ENCODE measurements at regions of chr3 and their contacts with region 1.

Region 1: DNA sequence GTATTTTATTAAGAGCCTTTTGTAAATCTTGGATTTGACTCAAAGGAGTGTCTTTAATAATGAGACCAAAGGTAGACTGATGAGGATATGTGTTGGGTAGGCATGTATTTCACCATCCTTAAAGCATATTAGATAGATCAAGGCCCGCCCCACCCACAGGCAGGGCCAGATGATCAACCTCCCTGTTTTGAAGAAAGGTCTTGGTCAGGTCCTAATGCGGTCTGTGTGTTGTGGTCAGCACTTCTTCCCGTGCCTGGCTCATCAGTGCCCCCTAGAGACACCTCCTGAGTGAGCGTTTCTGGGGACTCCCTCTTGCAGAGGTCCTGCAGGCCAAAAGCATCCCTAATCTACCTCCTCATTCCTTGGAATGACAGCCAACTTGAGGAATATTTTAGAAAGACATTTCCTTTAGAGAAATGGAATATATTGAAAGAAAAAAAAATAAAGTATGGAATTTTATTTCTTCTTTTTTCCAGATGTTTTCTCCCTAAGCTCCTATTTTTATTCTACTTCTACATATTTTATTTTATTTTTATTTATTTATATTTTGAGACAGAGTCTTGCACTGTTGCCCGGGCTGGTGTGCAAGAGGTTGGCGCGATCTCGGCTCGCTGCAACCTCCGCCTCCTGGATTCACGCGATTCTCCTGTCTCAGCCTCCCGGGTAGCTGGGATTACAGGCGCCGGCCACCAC is 6.0 kb downstream of the TM4SF4 start:
- DNase-seq: peak; percentile 81
- H3K4me3 ChIP-seq: no peak overlapping the region
- H3K27ac ChIP-seq: peak overlapping the region in 2 of 4 donors; percentile 2 to 15
- H3K4me1 ChIP-seq: peaks cover 0 to 9% (median 0%) of the 10 kb centered on the region in 4 donors
- H3K27me3 ChIP-seq: no peaks in the 10 kb centered on the region
- CTCF ChIP-seq: peak; percentile 70 to 77 (median 75)
- EP300 ChIP-seq: no peak
- POLR2A ChIP-seq: no peak

Region 2: GRCh38 chr3:147544290-147544689 is 1936.2 kb before region 1 on chr3:
- in situ Hi-C with region 1: no loop called
- intact Hi-C with region 1: no loop called
- DNase-seq: no peak
- H3K4me3 ChIP-seq: no peak overlapping the region
- H3K27ac ChIP-seq: no peak overlapping the region
- H3K4me1 ChIP-seq: no peaks in the 10 kb centered on the region
- H3K27me3 ChIP-seq: no peaks in the 10 kb centered on the region
- CTCF ChIP-seq: no peak
- EP300 ChIP-seq: no peak
- POLR2A ChIP-seq: no peak

Region 3: DNA sequence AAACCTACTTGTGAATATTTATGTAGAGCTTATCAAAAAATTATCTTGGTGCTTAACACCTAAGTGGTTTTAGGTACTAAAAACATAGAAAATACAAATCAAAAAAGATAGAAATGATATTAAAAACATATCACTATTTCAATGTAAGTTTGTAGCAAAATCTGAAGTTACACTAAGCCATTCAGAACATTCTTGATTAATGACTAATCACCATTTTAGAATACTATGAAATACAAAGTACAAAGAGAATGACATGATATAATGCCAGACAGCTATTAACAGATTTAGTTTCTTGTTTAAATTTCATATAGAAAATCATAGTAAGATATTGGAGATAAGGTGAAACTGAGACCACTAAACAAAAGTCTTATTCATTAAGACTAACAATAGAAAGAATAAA is 952.4 kb before region 1 on chr3:
- in situ Hi-C with region 1: no loop called
- intact Hi-C with region 1: no loop called
- DNase-seq: no peak
- H3K4me3 ChIP-seq: no peak overlapping the region
- H3K27ac ChIP-seq: no peak overlapping the region
- H3K4me1 ChIP-seq: no peaks in the 10 kb centered on the region
- H3K27me3 ChIP-seq: no peaks in the 10 kb centered on the region
- CTCF ChIP-seq: no peak
- EP300 ChIP-seq: no peak
- POLR2A ChIP-seq: no peak

Region 4: DNA sequence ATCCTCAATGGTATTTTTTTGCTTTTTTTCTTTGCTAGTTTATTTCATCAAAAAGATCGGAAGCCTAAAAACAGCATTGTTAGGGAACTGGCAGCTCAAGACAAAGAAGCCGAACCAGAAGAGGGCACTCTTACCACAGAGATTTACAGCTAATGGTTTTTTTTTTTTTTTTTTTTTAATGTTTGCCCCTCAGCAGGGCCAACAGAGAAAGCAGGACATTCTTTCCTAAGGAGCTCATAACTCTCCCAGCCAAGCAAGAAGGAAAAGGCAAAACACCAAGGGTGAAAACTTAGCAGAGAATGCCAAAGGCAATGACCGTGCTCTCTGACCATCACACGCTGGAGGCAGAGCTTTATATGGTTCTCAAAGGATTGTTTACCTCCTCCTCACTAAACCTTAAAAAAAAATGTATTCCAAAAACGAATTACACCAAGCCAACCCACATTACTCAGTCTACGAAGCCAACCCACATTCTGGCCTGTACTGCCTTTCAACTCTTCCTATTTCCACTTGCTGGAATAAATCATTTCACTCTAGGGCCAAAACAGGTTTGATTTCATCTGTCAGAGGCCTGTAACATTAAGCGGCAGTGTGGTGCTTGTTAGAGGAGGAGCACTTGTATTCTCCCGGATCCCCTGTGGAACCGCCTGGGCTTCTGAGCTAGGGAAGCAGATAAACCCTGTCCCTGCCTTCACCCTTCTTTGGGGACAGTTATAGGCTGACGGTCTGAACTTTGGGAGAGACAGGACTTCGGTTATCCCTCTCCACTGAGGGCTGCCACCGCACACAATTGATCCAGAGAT is 524.7 kb before region 1 on chr3:
- in situ Hi-C with region 1: loop called in 1 of 4 experiments (anchors 25 kb)
- intact Hi-C with region 1: no loop called
- DNase-seq: peak; percentile 35
- H3K4me3 ChIP-seq: no peak overlapping the region
- H3K27ac ChIP-seq: peak overlapping the region; percentile 67 to 91 (median 83)
- H3K4me1 ChIP-seq: peaks cover 0 to 20% (median 4%) of the 10 kb centered on the region in 4 donors
- H3K27me3 ChIP-seq: no peaks in the 10 kb centered on the region
- CTCF ChIP-seq: peak; percentile 41 to 58 (median 53)
- EP300 ChIP-seq: no peak
- POLR2A ChIP-seq: no peak

Region 5: GRCh38 chr3:149120051-149120972 is 360.2 kb before region 1 on chr3:
- in situ Hi-C with region 1: loop called (anchors 25 kb)
- intact Hi-C with region 1: no loop called
- DNase-seq: no peak
- H3K4me3 ChIP-seq: no peak overlapping the region
- H3K27ac ChIP-seq: no peak overlapping the region
- H3K4me1 ChIP-seq: peaks cover 0 to 3% (median 0%) of the 10 kb centered on the region in 4 donors
- H3K27me3 ChIP-seq: no peaks in the 10 kb centered on the region
- CTCF ChIP-seq: peak; percentile 49 to 64 (median 57)
- EP300 ChIP-seq: no peak
- POLR2A ChIP-seq: no peak

Region 6: DNA sequence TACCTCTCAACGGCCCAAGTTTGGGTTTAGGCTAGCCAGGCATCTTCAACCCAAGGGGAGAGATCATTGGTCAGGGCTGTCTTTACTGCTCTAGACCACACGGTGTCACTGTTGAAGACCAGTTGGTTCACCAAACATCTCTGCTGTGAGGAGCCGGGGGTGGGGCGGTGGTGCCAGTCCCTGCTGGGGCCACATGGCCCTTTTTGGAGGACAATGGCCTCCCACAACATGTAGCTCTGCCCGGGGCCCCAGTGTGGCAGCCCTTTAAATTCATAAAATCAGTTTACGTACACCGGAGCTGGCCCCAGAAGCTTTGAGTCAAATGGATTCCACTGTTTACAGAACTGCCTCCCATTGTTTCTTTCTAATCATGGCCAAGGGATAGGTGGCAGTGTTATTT is 127.9 kb before region 1 on chr3:
- in situ Hi-C with region 1: loop called in 2 of 4 experiments (anchors 10 kb)
- intact Hi-C with region 1: no loop called
- DNase-seq: peak; percentile 46
- H3K4me3 ChIP-seq: no peak overlapping the region
- H3K27ac ChIP-seq: no peak overlapping the region
- H3K4me1 ChIP-seq: peaks cover 0 to 10% (median 0%) of the 10 kb centered on the region in 4 donors
- H3K27me3 ChIP-seq: no peaks in the 10 kb centered on the region
- CTCF ChIP-seq: peak; percentile 61 to 69 (median 62)
- EP300 ChIP-seq: no peak
- POLR2A ChIP-seq: no peak

Region 7: DNA sequence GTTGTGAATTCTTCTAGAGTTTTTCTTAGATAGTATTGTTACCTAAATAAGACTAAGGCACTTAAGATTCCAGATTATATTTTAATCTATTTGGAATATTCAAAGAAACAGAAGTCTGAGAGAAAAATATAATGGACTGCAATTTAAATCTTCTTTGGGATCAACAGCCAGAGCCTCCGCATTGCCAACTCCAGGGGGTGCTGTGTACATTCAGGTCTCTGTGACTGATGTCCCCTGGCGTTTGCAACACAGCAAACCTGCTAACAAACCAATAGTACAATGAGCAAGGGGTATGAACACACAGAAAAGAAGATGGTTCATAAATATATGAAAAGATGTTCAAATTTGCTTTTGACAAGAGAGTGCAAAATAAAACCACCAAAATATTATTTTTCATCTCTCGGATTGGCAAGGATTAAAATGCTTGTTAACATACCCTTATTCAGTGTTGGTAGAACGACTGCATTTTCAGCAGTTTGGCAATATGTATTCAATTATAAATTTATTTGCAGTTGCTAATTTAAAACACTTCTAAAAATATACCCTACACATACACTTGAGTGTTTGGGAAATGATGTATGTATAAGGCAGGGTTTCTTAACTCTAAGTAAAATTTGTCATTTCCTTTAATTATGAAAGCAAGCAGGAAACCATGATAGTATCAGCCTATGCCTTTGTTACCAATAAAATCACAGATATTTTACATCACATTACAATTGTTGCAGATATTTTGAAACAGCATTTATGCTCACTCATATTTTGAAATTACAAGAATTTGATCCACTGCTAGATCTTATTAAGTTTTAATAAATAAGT is 86.9 kb before region 1 on chr3:
- in situ Hi-C with region 1: loop called in 3 of 4 experiments (anchors 5 to 10 kb)
- intact Hi-C with region 1: no loop called
- DNase-seq: peak; percentile 71
- H3K4me3 ChIP-seq: no peak overlapping the region
- H3K27ac ChIP-seq: no peak overlapping the region
- H3K4me1 ChIP-seq: peaks cover 0 to 5% (median 0%) of the 10 kb centered on the region in 4 donors
- H3K27me3 ChIP-seq: no peaks in the 10 kb centered on the region
- CTCF ChIP-seq: peak; percentile 66 to 88 (median 80)
- EP300 ChIP-seq: no peak
- POLR2A ChIP-seq: no peak

Measured in transverse colon (tissue), 4 donors.